ENCODE measurements at regions of chr7 and their contacts with region 1.

Region 1: GRCh38 chr7:1181640-1182039 is 21.6 kb upstream of the ZFAND2A start:
- DNase-seq: no peak
- H3K4me3 ChIP-seq: no peak overlapping the region
- H3K27ac ChIP-seq: peak overlapping the region; percentile 50
- H3K4me1 ChIP-seq: peaks cover 7% of the 10 kb centered on the region
- H3K27me3 ChIP-seq: peaks cover 17% of the 10 kb centered on the region
- CTCF ChIP-seq: no peak

Region 2: DNA sequence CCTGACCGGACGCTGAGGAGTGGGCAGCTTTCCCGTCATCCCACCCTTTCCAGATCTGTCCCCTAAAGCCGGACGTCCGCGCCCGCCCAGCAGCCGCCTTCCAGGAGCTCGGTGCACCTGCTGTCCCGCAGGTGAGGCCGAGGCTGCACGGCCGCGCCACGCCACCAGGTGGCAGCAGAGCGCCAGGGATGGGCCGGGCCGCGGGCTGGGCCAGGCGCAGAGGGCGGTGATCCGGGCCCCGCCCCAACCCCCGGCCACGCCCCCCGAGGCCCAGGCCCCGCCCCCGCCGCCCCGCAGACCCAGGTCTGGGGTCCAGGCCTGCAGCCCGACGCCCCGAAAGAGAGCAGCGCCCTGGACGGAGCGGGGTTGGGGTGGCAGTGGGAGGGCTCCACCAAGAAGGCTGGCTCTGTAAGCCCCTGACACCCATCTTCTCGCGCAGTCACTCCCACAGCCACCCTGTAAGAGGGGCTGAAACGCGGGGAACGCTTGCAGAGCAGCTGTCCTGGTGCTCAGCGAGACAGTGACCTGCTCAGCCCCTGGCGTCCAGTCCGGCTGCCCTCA is 859.4 kb before region 1 on chr7:
- CTCF ChIA-PET with region 1: no interaction called
- POLR2A ChIA-PET with region 1: no interaction called
- intact Hi-C with region 1: loop called (anchors 10 kb)
- DNase-seq: peak; percentile 55
- H3K4me3 ChIP-seq: no peak overlapping the region
- H3K27ac ChIP-seq: no peak overlapping the region
- H3K4me1 ChIP-seq: peaks cover 7% of the 10 kb centered on the region
- H3K27me3 ChIP-seq: peaks cover 9% of the 10 kb centered on the region
- CTCF ChIP-seq: peak; percentile 82

Region 3: DNA sequence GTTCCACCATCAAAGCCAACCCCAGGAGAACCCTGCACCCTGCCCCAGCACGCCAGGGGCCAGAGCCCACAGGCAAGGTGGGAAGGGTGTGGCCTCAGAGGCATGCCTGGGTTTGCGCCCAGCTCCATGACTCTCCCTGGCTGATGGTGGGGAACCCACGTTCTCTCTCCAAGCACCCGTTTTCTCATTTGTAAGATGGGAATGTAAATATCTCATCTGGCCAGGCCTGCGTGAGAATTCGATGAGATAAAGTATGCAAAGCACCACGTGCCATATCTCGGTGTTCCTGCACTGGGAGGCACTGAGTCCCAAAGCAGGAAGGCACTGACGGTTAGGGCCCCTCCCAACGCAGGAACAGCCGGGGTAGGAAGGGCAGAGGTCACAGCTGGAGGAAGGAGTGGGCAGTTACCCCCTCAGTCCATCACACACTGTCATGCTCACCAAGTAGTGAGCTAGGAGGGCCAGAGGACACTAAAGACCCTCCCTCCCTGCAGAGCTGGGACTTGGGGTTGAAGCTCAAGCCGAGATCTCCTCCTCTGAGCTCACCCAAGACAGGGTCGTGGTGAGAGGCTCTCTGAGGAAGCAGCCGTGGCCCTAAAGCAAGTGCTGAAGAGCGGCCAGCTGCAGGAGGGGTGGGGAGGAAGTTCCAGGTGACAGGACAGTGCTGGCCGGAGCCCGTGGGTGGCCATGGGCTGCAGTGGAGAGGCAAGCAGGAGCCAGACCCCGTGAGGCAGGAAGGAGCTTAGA is 482.4 kb before region 1 on chr7:
- CTCF ChIA-PET with region 1: no interaction called
- POLR2A ChIA-PET with region 1: no interaction called
- intact Hi-C with region 1: no loop called
- DNase-seq: no peak
- H3K4me3 ChIP-seq: no peak overlapping the region
- H3K27ac ChIP-seq: no peak overlapping the region
- H3K4me1 ChIP-seq: no peaks in the 10 kb centered on the region
- H3K27me3 ChIP-seq: no peaks in the 10 kb centered on the region
- CTCF ChIP-seq: no peak

Region 4: DNA sequence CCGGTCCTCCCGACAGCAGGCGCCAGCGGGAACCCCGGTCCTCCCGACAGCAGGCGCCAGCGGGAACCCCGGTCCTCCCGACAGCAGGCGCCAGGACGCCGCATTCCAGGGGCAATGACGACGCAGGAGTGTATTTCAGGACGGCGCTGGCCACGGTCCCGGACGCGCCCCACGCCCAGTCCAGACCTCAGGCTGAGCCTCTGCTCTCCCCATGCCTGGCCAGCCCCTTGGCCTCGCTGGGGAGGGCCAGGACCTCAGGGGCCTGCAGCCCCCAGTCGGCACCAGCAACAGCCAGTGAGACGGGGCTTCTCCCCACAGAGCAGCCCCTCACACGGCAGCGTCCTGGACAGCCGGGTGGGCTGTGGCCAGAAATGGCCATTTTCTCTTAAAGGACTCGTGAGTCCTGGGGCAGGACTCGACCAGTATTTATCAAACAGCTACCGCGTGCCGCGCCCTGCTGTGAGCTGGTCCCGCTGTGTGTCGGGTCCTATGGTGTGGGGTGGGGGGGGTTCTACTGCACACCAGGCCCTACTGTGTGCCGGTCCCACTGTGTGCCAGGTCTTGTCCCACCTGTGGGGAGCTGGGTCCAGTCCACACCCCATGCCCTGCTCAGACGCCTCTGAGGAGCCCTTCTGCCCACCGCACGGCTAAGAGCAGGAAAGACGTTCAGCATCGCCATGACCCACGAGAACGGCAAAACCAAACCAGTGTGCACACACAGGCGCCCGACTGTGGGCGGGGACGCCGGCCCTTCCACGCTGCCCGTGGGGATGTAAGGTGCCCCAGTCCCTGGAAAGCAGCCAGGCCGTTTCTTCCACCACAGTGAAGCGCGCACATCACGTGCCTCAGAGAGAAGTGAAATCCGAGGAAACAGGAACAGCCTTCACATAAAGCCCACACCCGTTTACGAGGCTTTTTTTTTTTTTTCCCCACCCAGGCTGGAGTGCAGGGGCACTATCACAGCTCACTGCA is 272.0 kb before region 1 on chr7:
- CTCF ChIA-PET with region 1: no interaction called
- POLR2A ChIA-PET with region 1: no interaction called
- intact Hi-C with region 1: loop called (anchors 5 kb)
- DNase-seq: no peak
- H3K4me3 ChIP-seq: peak overlapping the region; percentile 38
- H3K27ac ChIP-seq: no peak overlapping the region
- H3K4me1 ChIP-seq: peaks cover 14% of the 10 kb centered on the region
- H3K27me3 ChIP-seq: peaks cover 7% of the 10 kb centered on the region
- CTCF ChIP-seq: no peak